HEK293 (cell line): ENCODE measurements at regions of chr14 and their contacts with region 1.

Region 1: DNA sequence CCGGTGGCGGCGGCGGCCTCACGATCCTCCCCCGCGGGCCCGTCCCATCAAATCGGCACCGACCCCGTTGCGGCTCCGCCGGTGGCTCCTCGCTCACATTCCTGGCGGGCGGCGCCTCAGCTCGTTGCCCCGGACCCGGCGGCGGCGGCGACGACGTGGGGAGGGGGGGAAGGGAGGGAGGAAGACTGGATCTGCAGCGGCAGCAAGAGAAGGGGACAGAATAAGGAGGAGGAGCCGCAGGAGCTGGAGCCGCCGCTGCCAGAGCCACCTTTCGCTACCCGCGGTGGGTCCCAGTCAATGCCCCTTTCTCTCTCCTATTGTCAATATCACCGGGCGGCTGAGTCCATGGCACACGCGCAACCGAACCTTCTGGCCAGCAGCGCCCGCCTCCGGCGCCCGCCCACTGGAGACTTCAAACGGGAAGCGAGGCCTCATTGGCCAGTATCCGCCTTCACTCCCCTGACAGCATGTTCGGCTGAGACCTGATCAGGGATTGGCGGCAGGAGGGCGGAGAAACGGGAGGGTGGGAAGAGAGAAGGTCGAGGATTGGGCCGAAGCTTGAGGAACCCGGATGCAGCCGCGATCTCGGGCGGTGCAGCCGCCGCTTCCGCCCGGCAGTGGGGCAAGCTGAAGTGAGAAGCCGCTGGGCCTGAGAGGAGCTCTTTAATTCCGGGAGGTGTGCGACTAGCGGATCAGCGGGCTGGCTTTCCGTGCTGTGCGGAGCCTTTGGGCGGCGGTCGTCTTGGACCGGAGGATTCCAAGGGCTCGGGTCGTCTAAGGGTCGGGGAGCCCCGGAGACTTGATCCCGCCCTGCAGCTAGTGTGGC is at the start of gene PPP2R5E:
- H3K4me3 ChIP-seq: peak within 1 kb of the TSS; percentile 96
- H3K27ac ChIP-seq: peak within 1 kb of the TSS; percentile 94
- H3K4me1 ChIP-seq: no peaks in the 10 kb centered on the region; the same call in 1 of the 2 replicates
- CTCF ChIP-seq: peak; percentile 8; the same call in 1 of the 2 replicates

Region 2: GRCh38 chr14:63392236-63392635 is 151.0 kb before region 1 on chr14:
- CTCF ChIA-PET with region 1: interaction called, 8 read pairs
- POLR2A ChIA-PET with region 1: interaction called, 10 read pairs
- H3K4me3 ChIP-seq: no peak overlapping the region
- H3K27ac ChIP-seq: no peak overlapping the region
- H3K4me1 ChIP-seq: no peaks in the 10 kb centered on the region
- CTCF ChIP-seq: no peak

Region 3: DNA sequence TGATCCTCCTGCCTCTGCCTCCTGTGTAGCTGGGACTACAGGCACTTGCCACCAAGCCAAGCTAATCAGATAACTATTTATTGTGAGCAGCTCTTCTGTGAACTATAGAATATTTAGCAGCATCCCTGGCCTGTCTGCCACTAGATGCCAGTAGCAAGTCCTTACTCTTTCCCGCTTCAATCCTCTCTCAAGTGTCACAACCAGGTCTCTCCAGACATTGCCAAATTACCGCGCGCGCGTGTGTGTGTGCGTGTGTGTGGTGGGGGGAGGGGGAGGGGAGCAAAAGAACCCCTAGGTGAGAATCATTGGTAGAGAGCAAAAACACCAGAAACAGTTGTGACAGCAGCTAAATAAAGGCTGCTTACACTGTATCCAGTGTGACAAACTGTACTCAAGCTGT is 50.0 kb before region 1 on chr14:
- CTCF ChIA-PET with region 1: interaction called, 4 read pairs
- POLR2A ChIA-PET with region 1: interaction called, 18 read pairs
- H3K4me3 ChIP-seq: no peak overlapping the region
- H3K27ac ChIP-seq: no peak overlapping the region
- H3K4me1 ChIP-seq: peaks cover 13% of the 10 kb centered on the region; the same call in 1 of the 2 replicates
- CTCF ChIP-seq: no peak

Region 4: GRCh38 chr14:63641473-63642228 is 98.4 kb after region 1 on chr14 and contains the start of gene WDR89:
- CTCF ChIA-PET with region 1: interaction called, 4 read pairs
- POLR2A ChIA-PET with region 1: interaction called, 28 read pairs
- H3K4me3 ChIP-seq: peak within 1 kb of the TSS; percentile 76
- H3K27ac ChIP-seq: peak within 1 kb of the TSS; percentile 72
- H3K4me1 ChIP-seq: no peaks in the 10 kb centered on the region; the same call in 1 of the 2 replicates
- CTCF ChIP-seq: peak; percentile 72